GM10248 (cell line): ENCODE measurements at regions of chr1 and their contacts with region 1.

Region 1: DNA sequence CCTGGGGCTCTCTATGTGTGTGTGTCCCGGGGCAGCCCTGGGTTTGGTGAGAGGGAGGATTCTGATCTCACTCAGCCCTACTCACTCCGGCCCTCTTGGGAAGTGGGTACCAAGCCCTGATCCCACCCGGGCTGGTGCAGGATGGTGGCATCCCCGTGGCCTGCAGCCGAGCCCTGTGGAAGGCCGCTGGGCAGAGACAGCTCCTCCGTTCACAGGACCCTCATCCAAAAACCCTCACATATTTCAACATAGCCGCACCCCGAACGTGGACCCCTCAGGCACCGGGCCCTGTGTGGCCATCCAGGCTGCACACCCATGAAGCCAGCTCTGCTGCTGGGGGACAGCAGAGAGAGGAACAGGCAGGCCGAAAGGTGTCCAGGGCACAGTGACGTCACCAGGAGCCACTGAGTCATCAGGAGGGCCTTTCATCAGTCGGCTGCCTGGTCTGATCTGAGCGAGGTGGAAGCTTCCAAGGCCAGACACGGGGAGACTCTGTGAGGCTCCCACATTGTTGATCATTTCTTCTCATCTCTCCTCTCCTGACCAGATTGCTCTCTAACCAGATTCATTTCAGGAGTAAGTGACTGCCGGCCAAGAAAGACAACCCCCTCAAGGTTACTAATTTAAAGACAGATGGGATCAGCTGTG is 16.2 kb upstream of the GPR157 start:
- DNase-seq: peak; percentile 65
- CTCF ChIP-seq: no peak

Region 2: DNA sequence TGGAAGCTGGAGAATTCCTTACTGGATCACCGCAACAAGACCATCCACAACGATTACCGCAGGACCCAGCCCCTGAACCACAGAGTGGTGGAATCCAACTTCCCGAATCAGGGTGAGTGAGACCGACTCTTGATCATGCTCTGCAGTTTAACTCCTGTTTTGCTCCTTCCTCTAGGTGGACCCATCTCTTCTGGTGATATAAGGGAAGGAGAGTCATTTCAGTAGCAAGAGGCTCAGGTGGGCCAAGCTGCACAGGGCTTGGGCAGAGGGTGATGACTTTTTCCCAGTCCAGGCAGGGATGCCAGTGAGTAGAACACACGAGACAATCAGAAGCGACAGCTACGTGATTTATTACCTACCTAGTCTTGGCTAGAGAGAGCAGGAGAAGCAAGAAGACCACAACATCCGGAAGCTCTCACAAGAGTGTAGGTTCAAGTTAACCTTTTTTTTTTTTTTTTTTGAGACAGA is 174.2 kb before region 1 on chr1:
- CTCF ChIA-PET with region 1: no interaction called
- POLR2A ChIA-PET with region 1: no interaction called
- DNase-seq: peak; percentile 59
- CTCF ChIP-seq: no peak

Region 3: DNA sequence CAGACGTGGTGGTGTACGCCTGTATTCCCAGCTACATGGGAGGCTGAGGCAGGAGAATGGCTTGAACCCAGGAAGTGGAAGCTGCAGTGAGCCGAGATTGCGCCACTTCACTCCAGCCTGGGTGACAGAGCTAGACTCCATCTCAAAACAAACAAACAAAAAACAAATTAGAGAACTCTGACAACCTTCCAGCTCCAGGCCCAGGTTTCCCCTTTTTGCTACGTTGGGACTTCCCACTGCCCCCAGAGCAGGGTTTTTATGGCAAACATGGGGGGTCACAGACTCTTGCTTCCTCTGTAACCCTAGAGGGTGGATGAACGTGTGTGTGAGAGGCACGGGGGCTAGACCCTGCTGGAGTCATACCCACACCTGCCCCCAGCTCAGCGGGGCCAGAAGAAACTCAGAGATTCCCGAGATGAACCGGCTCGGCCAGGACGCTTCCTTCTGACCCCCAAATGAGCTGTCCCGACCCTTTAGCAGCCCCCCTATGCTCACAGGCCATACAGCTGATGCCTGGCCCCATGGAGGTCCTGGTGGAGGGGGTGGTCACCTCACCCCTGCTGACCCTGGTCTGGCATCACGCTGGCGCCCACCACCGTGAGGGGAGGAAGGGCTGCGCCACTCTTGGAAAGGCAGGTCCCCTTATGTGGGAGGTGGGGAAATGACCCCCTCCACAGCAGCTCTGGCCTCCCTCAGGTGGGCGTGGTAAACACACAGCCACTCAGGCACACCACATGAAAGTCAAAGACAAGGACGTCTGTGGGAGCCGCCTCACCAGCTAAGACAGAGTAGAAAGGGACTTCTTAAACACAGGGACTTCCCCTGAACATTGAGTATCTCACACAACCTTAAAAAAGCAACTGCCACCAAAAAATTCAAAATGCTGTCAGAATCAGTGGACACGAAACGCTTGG is 23.4 kb before region 1 on chr1:
- CTCF ChIA-PET with region 1: interaction called, 15 read pairs
- POLR2A ChIA-PET with region 1: interaction called, 4 read pairs
- DNase-seq: peak; percentile 78
- CTCF ChIP-seq: no peak

Region 4: GRCh38 chr1:9128520-9129265 is 16.5 kb before region 1 on chr1 and contains the start of gene GPR157:
- CTCF ChIA-PET with region 1: interaction called, 48 read pairs
- POLR2A ChIA-PET with region 1: interaction called, 4 read pairs
- DNase-seq: peak; percentile 99
- CTCF ChIP-seq: peak; percentile 2

Region 5: GRCh38 chr1:9133870-9134585 is 11.1 kb before region 1 on chr1:
- CTCF ChIA-PET with region 1: interaction called, 48 read pairs
- POLR2A ChIA-PET with region 1: interaction called, 4 read pairs
- DNase-seq: no peak
- CTCF ChIP-seq: no peak

Region 6: GRCh38 chr1:9166289-9167235 is 21.4 kb after region 1 on chr1:
- CTCF ChIA-PET with region 1: interaction called, 15 read pairs
- POLR2A ChIA-PET with region 1: interaction called, 3 read pairs
- DNase-seq: no peak
- CTCF ChIP-seq: no peak

Region 7: GRCh38 chr1:9196129-9197040 is 51.2 kb after region 1 on chr1:
- CTCF ChIA-PET with region 1: interaction called, 17 read pairs
- POLR2A ChIA-PET with region 1: no interaction called
- DNase-seq: peak; percentile 74
- CTCF ChIP-seq: peak; percentile 82

Region 8: GRCh38 chr1:9201401-9202239 is 56.5 kb after region 1 on chr1:
- CTCF ChIA-PET with region 1: interaction called, 17 read pairs
- POLR2A ChIA-PET with region 1: no interaction called
- DNase-seq: no peak
- CTCF ChIP-seq: no peak